ENCODE measurements at regions of chr20 and their contacts with region 1.

Region 1: DNA sequence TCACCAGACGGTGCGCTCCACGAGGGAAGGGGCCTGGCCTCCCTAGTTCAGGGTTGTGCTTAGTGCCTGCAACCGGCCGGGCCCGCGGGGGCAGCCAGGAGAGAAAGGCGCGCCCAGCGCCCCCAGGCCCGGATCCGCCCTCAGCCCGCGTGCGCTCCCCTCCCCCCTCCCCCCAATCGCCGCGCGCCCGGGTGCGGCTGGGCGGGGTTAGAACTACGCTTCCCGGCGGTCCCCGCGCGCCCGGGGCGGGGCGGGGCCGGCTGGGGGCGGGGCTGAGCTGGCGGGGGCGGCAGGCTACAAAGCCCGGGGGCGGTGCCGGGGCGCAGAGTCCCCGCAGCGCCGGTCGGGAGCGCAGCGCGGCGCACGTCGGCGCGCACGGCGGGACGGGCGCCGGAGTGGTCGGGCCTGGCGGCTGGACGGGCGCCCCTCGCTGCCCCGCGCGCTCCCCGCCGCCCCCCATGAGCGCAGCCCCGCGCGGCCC is at the start of gene RBM38:
- DNase-seq: peak; percentile 70 to 83 (median 81)
- H3K4me3 ChIP-seq: peak within 1 kb of the TSS; percentile 85
- H3K27ac ChIP-seq: peak within 1 kb of the TSS; percentile 65 to 84
- H3K4me1 ChIP-seq: peaks cover 24% of the 10 kb centered on the region
- H3K27me3 ChIP-seq: no peaks in the 10 kb centered on the region
- CTCF ChIP-seq: no peak
- EP300 ChIP-seq: no peak
- POLR2A ChIP-seq: no peak
- total RNA-seq, gene RBM38: 20.0 to 77.6 (median 39.3) TPM

Region 2: GRCh38 chr20:57244627-57245214 is 146.4 kb before region 1 on chr20:
- intact Hi-C with region 1: no loop called
- DNase-seq: no peak
- H3K4me3 ChIP-seq: no peak overlapping the region
- H3K27ac ChIP-seq: no peak overlapping the region
- H3K4me1 ChIP-seq: no peaks in the 10 kb centered on the region
- H3K27me3 ChIP-seq: no peaks in the 10 kb centered on the region
- CTCF ChIP-seq: no peak
- EP300 ChIP-seq: no peak
- POLR2A ChIP-seq: no peak

Region 3: GRCh38 chr20:57440678-57441520 is 49.8 kb after region 1 on chr20:
- intact Hi-C with region 1: loop called in 1 of 4 experiments (anchors 1 kb)
- DNase-seq: peak; percentile 71 to 90 (median 83)
- H3K4me3 ChIP-seq: no peak overlapping the region
- H3K27ac ChIP-seq: peak overlapping the region; percentile 65 to 81
- H3K4me1 ChIP-seq: peaks cover 24% of the 10 kb centered on the region
- H3K27me3 ChIP-seq: no peaks in the 10 kb centered on the region
- CTCF ChIP-seq: no peak
- EP300 ChIP-seq: no peak
- POLR2A ChIP-seq: no peak

Region 4: DNA sequence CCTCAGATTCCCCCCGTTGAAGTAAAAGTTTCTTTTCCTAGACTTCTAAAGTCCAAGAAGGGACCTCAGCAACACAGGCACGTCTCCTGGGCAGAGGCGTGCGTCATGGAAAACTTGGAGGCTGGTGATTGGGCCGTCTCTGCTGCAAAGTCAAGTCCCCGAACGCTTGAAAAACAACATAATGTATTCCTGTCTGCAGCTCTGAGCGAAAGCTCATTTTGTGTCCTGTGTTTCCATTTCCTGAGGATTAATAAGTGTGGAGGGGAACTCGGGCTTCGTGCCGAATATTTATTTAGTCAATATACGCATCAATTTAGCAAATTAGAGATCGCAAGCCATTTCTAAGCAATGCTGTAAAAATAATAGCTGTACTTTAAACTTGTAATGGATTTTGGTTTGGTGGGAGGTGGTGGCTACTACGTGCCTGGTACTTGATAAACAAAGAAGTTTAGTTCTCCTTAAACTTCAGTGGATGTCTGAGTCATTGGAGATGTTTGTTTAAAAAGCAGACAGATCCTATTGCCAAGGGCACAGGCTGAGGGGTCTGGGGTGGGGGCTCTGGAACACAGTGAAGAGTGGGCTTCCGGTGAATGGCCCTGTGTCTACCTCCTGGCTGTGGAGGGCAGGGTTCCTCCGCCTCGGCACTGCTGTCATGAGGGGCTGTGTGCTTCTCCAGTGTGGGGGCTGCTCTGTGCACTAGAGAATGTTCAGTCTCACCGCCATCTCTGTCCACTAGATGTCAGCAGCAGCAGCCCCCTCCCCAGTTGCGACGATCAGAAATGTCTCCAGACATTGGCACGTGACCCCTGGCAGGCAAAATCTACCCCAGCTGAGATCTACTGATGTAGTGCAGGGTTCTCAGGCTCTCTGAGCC is 191.6 kb after region 1 on chr20:
- intact Hi-C with region 1: loop called in 1 of 4 experiments (anchors 10 kb)
- DNase-seq: peak; percentile 59 to 77 (median 71)
- H3K4me3 ChIP-seq: no peak overlapping the region
- H3K27ac ChIP-seq: peak overlapping the region in 1 of 2 donors; percentile 62
- H3K4me1 ChIP-seq: peaks cover 9% of the 10 kb centered on the region
- H3K27me3 ChIP-seq: no peaks in the 10 kb centered on the region
- CTCF ChIP-seq: peak in 1 of 3 donors; percentile 16
- EP300 ChIP-seq: no peak
- POLR2A ChIP-seq: no peak

Region 5: GRCh38 chr20:57596998-57597939 is 206.2 kb after region 1 on chr20:
- intact Hi-C with region 1: loop called in 1 of 4 experiments (anchors 10 kb)
- DNase-seq: peak; percentile 56 to 85 (median 75)
- H3K4me3 ChIP-seq: no peak overlapping the region
- H3K27ac ChIP-seq: no peak overlapping the region
- H3K4me1 ChIP-seq: peaks cover 2% of the 10 kb centered on the region
- H3K27me3 ChIP-seq: no peaks in the 10 kb centered on the region
- CTCF ChIP-seq: peak; percentile 89 to 95 (median 92)
- EP300 ChIP-seq: no peak
- POLR2A ChIP-seq: no peak

Region 6: GRCh38 chr20:58209652-58210397 is 818.7 kb after region 1 on chr20:
- intact Hi-C with region 1: loop called in 1 of 4 experiments (anchors 10 kb)
- DNase-seq: peak; percentile 77 to 93 (median 89)
- H3K4me3 ChIP-seq: no peak overlapping the region
- H3K27ac ChIP-seq: no peak overlapping the region
- H3K4me1 ChIP-seq: no peaks in the 10 kb centered on the region
- H3K27me3 ChIP-seq: no peaks in the 10 kb centered on the region
- CTCF ChIP-seq: peak; percentile 100
- EP300 ChIP-seq: no peak
- POLR2A ChIP-seq: no peak